HCT116 (cell line): ENCODE measurements at regions of chr9 and their contacts with region 1.

Region 1: DNA sequence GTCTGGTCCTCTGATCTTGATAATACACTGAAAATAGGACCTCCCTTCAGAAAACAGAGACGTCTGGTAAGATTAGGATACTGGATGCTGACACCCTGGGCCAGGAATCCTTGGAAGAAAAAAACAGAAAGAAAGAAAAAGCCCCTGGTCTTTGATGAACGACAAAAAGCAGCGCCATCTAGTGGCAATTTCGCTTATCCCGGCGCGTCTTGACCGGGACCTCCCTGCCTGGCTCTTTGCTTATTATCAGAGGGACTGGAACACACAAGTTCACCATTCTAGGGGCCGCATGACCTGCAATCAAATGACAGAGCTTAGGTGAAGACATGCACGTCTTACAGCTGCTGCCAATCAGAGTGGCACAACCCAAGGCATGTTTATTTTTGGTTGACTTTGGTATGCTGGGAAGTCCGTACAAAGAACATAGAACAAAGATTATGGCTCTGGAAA is 114.9 kb upstream of the NFIB start:
- DNase-seq: peak; percentile 57
- ATAC-seq: peak; percentile 90
- H3K4me3 ChIP-seq: no peak overlapping the region
- H3K27ac ChIP-seq: no peak overlapping the region
- H3K4me1 ChIP-seq: 0 out of 4 replicates have a peak, but pooled peaks cover 0 to 4% of the 10 kb centered on the region in 2 experiments
- H3K27me3 ChIP-seq: no peaks in the 10 kb centered on the region
- CTCF ChIP-seq: peak; percentile 50 to 84 (median 72); a peak in 5 of 6 replicates
- POLR2A ChIP-seq: no peak
- RAD21 ChIP-seq: peak; percentile 55

Region 2: GRCh38 chr9:12702160-12702758 is 1726.5 kb before region 1 on chr9:
- CTCF ChIA-PET with region 1: interaction called, 4 read pairs
- POLR2A ChIA-PET with region 1: no interaction called
- RAD21 ChIA-PET with region 1: no interaction called
- intact Hi-C with region 1: loop called (anchors 5 kb)
- DNase-seq: peak; percentile 56
- ATAC-seq: peak; percentile 91
- H3K4me3 ChIP-seq: no peak overlapping the region
- H3K27ac ChIP-seq: no peak overlapping the region
- H3K4me1 ChIP-seq: no peaks in the 10 kb centered on the region
- H3K27me3 ChIP-seq: 0 out of 2 replicates have a peak, but pooled peaks cover 4% of the 10 kb centered on the region
- CTCF ChIP-seq: peak; percentile 59 to 77 (median 59); a peak in 5 of 6 replicates
- POLR2A ChIP-seq: no peak
- RAD21 ChIP-seq: peak; percentile 82

Region 3: DNA sequence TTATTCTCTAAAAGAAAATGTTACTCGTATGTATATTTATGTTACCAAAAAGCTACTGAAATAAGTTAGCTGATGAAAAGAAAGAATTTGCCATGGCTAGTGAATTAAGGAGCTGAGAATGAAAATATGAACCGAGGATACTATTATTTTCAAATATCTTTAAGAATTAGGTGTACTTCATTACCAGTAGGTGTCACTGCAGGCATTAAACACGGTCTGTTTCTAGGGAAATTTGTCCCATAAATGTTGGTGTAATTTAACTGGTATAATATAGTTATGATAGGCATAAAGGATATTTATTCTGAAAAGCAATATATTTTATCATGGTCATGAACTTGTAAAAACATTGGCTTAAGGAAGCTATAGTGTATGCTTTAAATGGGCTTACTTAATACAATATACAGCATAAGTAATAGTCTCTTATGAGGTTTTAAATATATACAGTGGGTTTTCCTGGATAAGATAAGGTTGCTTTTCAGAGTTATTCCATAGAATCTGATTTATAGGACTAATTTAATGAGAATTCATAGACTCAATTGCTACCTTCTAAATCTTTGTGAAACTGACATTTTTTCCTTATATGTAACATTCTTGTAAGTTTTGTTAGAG is 1076.9 kb before region 1 on chr9:
- CTCF ChIA-PET with region 1: interaction called, 3 read pairs
- POLR2A ChIA-PET with region 1: no interaction called
- RAD21 ChIA-PET with region 1: no interaction called
- intact Hi-C with region 1: loop called (anchors 5 kb)
- DNase-seq: peak; percentile 7
- ATAC-seq: peak; percentile 49; the same call in 1 of the 2 replicates
- H3K4me3 ChIP-seq: no peak overlapping the region
- H3K27ac ChIP-seq: no peak overlapping the region
- H3K4me1 ChIP-seq: no peaks in the 10 kb centered on the region
- H3K27me3 ChIP-seq: no peaks in the 10 kb centered on the region
- CTCF ChIP-seq: peak; percentile 15 to 54 (median 36); a peak in 4 of 6 replicates
- POLR2A ChIP-seq: no peak
- RAD21 ChIP-seq: peak; percentile 49

Region 4: GRCh38 chr9:13427587-13427986 is 1001.2 kb before region 1 on chr9:
- CTCF ChIA-PET with region 1: interaction called, 15 read pairs
- POLR2A ChIA-PET with region 1: no interaction called
- RAD21 ChIA-PET with region 1: no interaction called
- intact Hi-C with region 1: loop called (anchors 1 kb)
- DNase-seq: no peak
- ATAC-seq: no peak
- H3K4me3 ChIP-seq: no peak overlapping the region
- H3K27ac ChIP-seq: no peak overlapping the region
- H3K4me1 ChIP-seq: no peaks in the 10 kb centered on the region
- H3K27me3 ChIP-seq: no peaks in the 10 kb centered on the region
- CTCF ChIP-seq: peak; percentile 33 to 69 (median 47); a peak in 5 of 6 replicates
- POLR2A ChIP-seq: no peak
- RAD21 ChIP-seq: peak; percentile 62

Region 5: GRCh38 chr9:14238552-14238951 is 190.3 kb before region 1 on chr9:
- CTCF ChIA-PET with region 1: no interaction called
- POLR2A ChIA-PET with region 1: no interaction called
- RAD21 ChIA-PET with region 1: interaction called in 1 of 2 experiments, 13 read pairs
- intact Hi-C with region 1: no loop called
- DNase-seq: no peak
- ATAC-seq: peak; percentile 86
- H3K4me3 ChIP-seq: 0 out of 4 replicates have a peak overlapping the region, but pooled peaks of 1 of the 2 experiments have one; percentile 12
- H3K27ac ChIP-seq: peak overlapping the region; percentile 21; the same call in 1 of the 2 replicates
- H3K4me1 ChIP-seq: peaks cover 6 to 16% of the 10 kb centered on the region in 2 experiments; a peak in 3 of 4 replicates
- H3K27me3 ChIP-seq: no peaks in the 10 kb centered on the region
- CTCF ChIP-seq: no peak
- POLR2A ChIP-seq: no peak
- RAD21 ChIP-seq: no peak